Aorta (tissue), 5 donors: ENCODE measurements at regions of chr15 and their contacts with region 1.

Region 1: DNA sequence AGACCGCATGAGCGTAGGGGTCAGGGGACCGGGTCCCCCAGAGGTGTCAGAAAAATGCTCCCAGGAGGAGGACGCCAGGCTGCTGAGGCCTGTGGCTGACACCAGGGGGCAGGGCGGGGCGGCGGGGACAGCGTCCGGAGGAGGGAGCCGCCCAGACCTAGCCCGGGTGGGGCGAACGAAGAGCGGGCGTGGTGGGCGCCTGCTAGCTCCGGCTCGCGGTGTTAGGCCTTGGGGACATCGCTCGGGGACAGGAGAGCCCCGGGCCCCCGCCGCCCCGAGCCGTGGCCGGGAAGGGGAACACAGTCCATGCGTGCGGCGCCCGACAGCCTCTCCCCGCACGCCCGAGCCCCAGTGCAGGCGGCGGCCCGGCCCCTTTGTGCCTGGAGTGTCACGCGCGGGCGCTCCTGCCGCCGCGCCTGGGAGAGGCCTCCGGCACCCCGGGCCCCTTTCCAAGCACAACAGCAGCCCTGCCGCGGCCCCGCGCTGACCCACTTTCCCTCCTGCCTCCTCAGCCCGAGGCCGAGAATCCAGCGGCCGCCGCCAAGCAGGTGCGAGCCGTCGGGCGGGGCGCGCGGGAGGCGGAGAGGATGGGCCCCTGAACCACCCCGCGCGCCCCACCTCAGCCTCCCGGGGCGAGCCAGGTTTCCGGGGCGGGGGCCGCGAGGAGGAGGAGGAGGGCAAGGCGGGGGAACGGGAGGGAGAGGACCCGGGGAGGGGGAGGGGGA is 111.0 kb upstream of the KLF13 start:
- DNase-seq: peak; percentile 88
- ATAC-seq: peak; percentile 89
- H3K4me3 ChIP-seq: peak overlapping the region; percentile 18 to 77
- H3K27ac ChIP-seq: peak overlapping the region in 1 of 2 donors; percentile 15
- H3K4me1 ChIP-seq: peaks cover 0 to 3% of the 10 kb centered on the region in 2 donors
- H3K27me3 ChIP-seq: no peaks in the 10 kb centered on the region

Region 2: GRCh38 chr15:31236184-31237042 is 20.8 kb after region 1 on chr15:
- intact Hi-C with region 1: loop called in 1 of 2 experiments (anchors 2 kb)
- DNase-seq: peak; percentile 78 to 85
- ATAC-seq: peak; percentile 93
- H3K4me3 ChIP-seq: no peak overlapping the region
- H3K27ac ChIP-seq: peak overlapping the region in 1 of 2 donors; percentile 28
- H3K4me1 ChIP-seq: no peaks in the 10 kb centered on the region
- H3K27me3 ChIP-seq: no peaks in the 10 kb centered on the region

Region 3: DNA sequence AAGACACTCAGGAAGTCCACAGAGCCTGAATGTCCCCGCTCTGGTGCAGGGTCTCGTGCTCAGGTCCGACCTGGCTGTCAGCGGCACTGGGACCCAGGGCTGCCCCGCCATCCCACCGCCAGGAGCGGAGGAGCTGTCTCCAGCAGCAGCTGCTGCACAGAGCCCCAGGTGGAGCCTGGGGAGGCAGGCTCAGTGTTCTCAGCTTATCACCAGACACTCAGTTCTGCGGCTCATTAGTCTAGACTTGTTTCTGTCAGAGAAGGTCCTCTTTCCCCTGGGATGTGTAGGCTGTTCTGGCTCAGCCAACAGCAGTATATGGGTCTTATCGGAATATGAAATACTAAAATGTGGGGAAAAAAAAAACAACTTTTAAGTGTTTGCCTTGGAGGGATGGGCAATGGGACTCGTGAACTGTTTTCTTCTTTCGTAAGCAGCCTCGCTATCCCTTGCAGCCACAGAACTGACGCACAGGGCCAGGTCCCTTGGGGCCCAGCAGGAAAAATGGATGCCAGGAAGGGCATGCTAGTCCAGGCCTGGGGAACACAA is 186.9 kb after region 1 on chr15:
- intact Hi-C with region 1: loop called in 1 of 2 experiments (anchors 5 kb)
- DNase-seq: peak; percentile 83 to 86
- ATAC-seq: peak; percentile 83
- H3K4me3 ChIP-seq: no peak overlapping the region
- H3K27ac ChIP-seq: peak overlapping the region; percentile 3 to 78
- H3K4me1 ChIP-seq: peaks cover 0 to 5% of the 10 kb centered on the region in 2 donors
- H3K27me3 ChIP-seq: no peaks in the 10 kb centered on the region